SK-N-SH (cell line): ENCODE measurements at regions of chr18 and their contacts with region 1.

Region 1: DNA sequence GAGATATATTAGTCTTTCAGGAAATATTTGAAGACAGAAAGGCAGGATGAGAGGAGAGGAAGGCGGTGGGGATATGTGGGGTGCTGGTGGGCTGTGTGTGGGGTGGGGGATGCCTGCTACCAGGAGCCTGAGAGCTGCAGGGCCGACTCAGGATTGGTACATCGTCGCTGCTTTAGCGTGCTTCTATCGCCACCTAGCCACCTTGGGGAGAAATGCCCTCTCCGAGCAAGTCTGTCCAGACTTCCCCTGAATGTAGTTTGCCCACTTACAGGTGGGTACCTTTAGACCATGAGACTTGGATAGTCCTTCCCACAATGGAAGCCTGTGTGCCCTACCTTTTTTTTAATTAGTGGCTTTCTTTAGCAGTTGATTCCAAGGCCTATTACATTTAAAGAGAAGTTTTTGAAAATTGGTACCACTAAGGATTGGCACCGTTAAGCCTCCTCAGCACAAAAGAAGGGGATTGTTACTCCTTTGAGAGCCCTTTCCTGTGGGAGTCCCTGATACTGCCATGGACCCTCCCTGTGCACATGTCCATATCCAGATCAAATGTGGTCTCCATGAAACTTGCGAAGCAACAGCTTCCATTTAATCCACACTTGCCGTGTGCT is 114.1 kb upstream of the NDUFV2 start:
- DNase-seq: peak; percentile 81
- H3K4me3 ChIP-seq: peak overlapping the region in 1 of 2 experiments; percentile 21; a peak in 1 of 4 replicates
- H3K27ac ChIP-seq: no peak overlapping the region
- H3K4me1 ChIP-seq: peaks cover 6 to 8% of the 10 kb centered on the region in 2 experiments; a peak in 2 of 4 replicates
- H3K27me3 ChIP-seq: no peaks in the 10 kb centered on the region
- CTCF ChIP-seq: peak; percentile 86
- EP300 ChIP-seq: no peak
- RAD21 ChIP-seq: peak; percentile 95

Region 2: GRCh38 chr18:8654503-8655451 is 333.6 kb before region 1 on chr18:
- CTCF ChIA-PET with region 1: interaction called, 266 read pairs
- POLR2A ChIA-PET with region 1: interaction called, 3 read pairs
- DNase-seq: peak; percentile 51
- H3K4me3 ChIP-seq: no peak overlapping the region; a peak in 1 of 4 replicates
- H3K27ac ChIP-seq: no peak overlapping the region
- H3K4me1 ChIP-seq: peaks cover 0 to 14% of the 10 kb centered on the region in 2 experiments; a peak in 1 of 4 replicates
- H3K27me3 ChIP-seq: no peaks in the 10 kb centered on the region
- CTCF ChIP-seq: peak; percentile 78
- EP300 ChIP-seq: no peak
- RAD21 ChIP-seq: peak; percentile 86

Region 3: GRCh38 chr18:8685141-8685913 is 303.0 kb before region 1 on chr18:
- CTCF ChIA-PET with region 1: interaction called, 10 read pairs
- POLR2A ChIA-PET with region 1: no interaction called
- DNase-seq: no peak
- H3K4me3 ChIP-seq: no peak overlapping the region
- H3K27ac ChIP-seq: no peak overlapping the region
- H3K4me1 ChIP-seq: no peaks in the 10 kb centered on the region
- H3K27me3 ChIP-seq: no peaks in the 10 kb centered on the region
- CTCF ChIP-seq: no peak
- EP300 ChIP-seq: no peak
- RAD21 ChIP-seq: no peak

Region 4: GRCh38 chr18:8704361-8705279 is 283.7 kb before region 1 on chr18:
- CTCF ChIA-PET with region 1: interaction called, 34 read pairs
- POLR2A ChIA-PET with region 1: interaction called, 16 read pairs
- DNase-seq: peak; percentile 99
- H3K4me3 ChIP-seq: peak overlapping the region; percentile 66 to 83
- H3K27ac ChIP-seq: peak overlapping the region; percentile 86 to 87
- H3K4me1 ChIP-seq: peaks cover 20 to 25% of the 10 kb centered on the region in 2 experiments
- H3K27me3 ChIP-seq: no peaks in the 10 kb centered on the region
- CTCF ChIP-seq: no peak
- EP300 ChIP-seq: no peak
- RAD21 ChIP-seq: no peak

Region 5: GRCh38 chr18:8858888-8859511 is 129.4 kb before region 1 on chr18:
- CTCF ChIA-PET with region 1: no interaction called
- POLR2A ChIA-PET with region 1: no interaction called
- DNase-seq: no peak
- H3K4me3 ChIP-seq: no peak overlapping the region
- H3K27ac ChIP-seq: 0 out of 4 replicates have a peak overlapping the region, but pooled peaks of 1 of the 2 experiments have one; percentile 10
- H3K4me1 ChIP-seq: no peaks in the 10 kb centered on the region
- H3K27me3 ChIP-seq: no peaks in the 10 kb centered on the region
- CTCF ChIP-seq: no peak
- EP300 ChIP-seq: no peak
- RAD21 ChIP-seq: no peak

Region 6: GRCh38 chr18:8998481-8999217 is 10.3 kb after region 1 on chr18:
- CTCF ChIA-PET with region 1: interaction called, 29 read pairs
- POLR2A ChIA-PET with region 1: no interaction called
- DNase-seq: no peak
- H3K4me3 ChIP-seq: no peak overlapping the region
- H3K27ac ChIP-seq: no peak overlapping the region
- H3K4me1 ChIP-seq: no peaks in the 10 kb centered on the region
- H3K27me3 ChIP-seq: no peaks in the 10 kb centered on the region
- CTCF ChIP-seq: no peak
- EP300 ChIP-seq: no peak
- RAD21 ChIP-seq: no peak

Region 7: DNA sequence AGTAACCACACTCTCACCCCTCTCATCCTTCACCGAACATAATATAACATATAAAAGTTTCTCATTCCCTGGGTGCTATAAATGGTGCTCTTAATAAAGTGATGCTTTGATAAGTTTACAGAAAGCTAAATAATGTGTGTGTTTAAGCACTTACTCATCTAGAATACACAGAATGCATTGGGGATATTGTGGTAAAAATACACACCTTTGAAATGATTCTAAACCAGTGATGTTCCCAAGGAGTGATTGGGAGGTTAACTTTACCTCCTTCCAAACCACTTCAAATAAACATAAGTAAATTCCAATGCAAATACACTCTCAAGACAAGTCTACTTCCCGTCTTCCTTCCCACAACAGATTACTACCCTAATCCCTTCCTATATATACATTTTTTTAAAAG is 260.9 kb after region 1 on chr18:
- CTCF ChIA-PET with region 1: no interaction called
- POLR2A ChIA-PET with region 1: no interaction called
- DNase-seq: no peak
- H3K4me3 ChIP-seq: no peak overlapping the region
- H3K27ac ChIP-seq: no peak overlapping the region
- H3K4me1 ChIP-seq: no peaks in the 10 kb centered on the region
- H3K27me3 ChIP-seq: no peaks in the 10 kb centered on the region
- CTCF ChIP-seq: no peak
- EP300 ChIP-seq: no peak
- RAD21 ChIP-seq: no peak